ENCODE measurements at regions of chr3 and their contacts with region 1.

Region 1: GRCh38 chr3:44624749-44625480 is at the start of gene ZNF197:
- DNase-seq: peak; percentile 91
- ATAC-seq: peak; percentile 96
- H3K4me3 ChIP-seq: peak within 1 kb of the TSS; percentile 92
- H3K27ac ChIP-seq: peak within 1 kb of the TSS; percentile 25
- H3K4me1 ChIP-seq: peaks cover 13% of the 10 kb centered on the region
- H3K27me3 ChIP-seq: no peaks in the 10 kb centered on the region
- CTCF ChIP-seq: no peak
- total RNA-seq, gene ZNF197: 9.6 and 10.4 TPM in 2 replicates

Region 2: DNA sequence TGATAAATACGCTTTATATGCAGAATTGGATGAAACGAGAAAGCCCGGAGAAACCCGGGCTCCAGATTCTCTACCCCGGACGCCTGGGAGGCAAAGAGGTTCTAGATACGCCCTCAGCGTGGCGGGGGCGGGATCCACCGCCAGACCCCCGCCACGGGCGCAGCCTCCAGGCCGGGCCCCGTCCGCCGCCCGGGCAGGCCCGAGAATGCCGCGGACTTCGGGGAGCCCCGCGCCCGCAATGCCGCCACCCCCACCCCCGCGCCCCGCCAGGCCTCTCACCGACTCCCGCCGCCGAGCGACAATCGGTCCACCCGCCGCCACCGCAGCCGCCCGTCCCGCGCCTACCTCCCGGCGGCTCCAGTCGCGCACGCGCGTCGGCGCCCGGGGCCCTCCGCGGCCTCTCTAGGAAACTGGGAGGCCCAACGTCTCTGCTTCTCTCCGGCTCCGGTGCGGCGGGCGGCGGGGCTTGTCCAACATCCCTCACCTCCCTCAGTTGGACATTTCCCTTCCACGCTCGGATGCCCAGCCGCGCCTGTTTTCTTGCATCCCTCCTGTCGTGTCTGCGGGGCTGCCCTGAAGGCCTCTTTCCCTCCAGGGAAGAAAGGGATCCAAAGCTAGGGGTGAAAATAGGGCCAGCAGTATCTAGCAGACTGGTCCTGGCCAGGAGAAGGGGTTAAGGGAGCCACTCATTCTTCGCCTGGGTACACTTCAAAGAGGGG is 147.4 kb before region 1 on chr3 and contains the start of gene ZNF445:
- CTCF ChIA-PET with region 1: no interaction called
- POLR2A ChIA-PET with region 1: no interaction called
- intact Hi-C with region 1: loop called (anchors 2 kb)
- DNase-seq: peak; percentile 83
- ATAC-seq: peak; percentile 90
- H3K4me3 ChIP-seq: peak within 1 kb of the TSS; percentile 83
- H3K27ac ChIP-seq: no peak within 1 kb of the TSS
- H3K4me1 ChIP-seq: peaks cover 5% of the 10 kb centered on the region; the same call in 1 of the 2 replicates
- H3K27me3 ChIP-seq: no peaks in the 10 kb centered on the region
- CTCF ChIP-seq: no peak
- total RNA-seq, gene ZNF445: 7.7 and 8.2 TPM in 2 replicates

Region 3: DNA sequence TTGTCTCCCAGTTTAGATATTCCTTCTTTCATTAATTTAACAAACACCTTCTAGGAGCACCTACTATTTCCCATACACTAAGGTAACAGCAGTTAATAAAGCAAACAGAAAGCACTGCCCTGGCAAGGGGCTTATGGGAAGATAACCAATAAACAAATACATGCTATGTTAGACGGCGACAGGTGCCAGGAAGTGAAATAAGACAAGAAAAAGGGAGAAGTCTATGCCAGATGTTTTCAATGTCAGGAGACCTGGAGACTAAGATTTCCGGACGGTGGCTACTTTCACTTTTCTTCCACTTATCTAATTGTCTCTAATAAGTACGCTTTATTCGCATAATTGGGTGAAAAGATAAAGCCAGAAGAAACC is 114.9 kb before region 1 on chr3:
- CTCF ChIA-PET with region 1: interaction called, 4 read pairs
- POLR2A ChIA-PET with region 1: no interaction called
- intact Hi-C with region 1: loop called (anchors 1 kb)
- DNase-seq: peak; percentile 17
- ATAC-seq: peak; percentile 44
- H3K4me3 ChIP-seq: peak overlapping the region; percentile 81
- H3K27ac ChIP-seq: no peak overlapping the region
- H3K4me1 ChIP-seq: peaks cover 15% of the 10 kb centered on the region
- H3K27me3 ChIP-seq: no peaks in the 10 kb centered on the region
- CTCF ChIP-seq: no peak

Region 4: DNA sequence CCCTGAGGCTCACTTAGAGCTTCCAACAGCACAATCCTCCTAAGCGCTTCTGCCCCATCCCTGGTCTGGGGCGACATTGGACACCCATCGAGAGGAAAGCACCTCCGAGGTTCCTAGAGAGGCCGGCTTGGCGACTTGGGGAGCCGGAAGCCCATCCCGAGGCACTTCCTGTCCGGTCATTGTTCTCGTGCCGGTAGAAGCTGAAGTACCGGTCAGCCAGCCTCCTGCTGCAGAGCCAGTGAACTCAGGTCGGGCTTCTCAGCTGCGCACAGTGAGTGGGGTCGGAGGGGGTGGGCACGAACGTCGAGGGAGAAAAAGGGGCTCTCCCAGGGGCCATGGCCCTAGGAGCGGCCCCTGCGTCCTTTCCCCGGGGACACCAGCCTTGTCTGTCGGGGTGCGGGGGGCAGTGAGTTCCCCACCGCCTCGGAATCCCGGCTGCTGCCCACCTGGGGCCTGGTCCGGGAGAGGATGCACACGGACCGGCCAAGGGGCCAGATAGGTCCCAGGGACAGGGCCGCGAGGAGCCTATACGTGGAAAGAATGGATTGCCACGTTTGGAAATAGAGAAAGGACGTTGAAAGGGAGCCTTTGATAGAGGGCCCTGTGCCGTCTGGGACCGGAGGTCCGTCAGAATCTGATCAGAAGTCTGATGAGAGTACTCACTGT is 23.8 kb after region 1 on chr3 and contains the start of gene ZNF35:
- CTCF ChIA-PET with region 1: no interaction called
- POLR2A ChIA-PET with region 1: no interaction called
- intact Hi-C with region 1: loop called (anchors 1 kb)
- DNase-seq: peak; percentile 92
- ATAC-seq: peak; percentile 98
- H3K4me3 ChIP-seq: peak within 1 kb of the TSS; percentile 74
- H3K27ac ChIP-seq: no peak within 1 kb of the TSS
- H3K4me1 ChIP-seq: peaks cover 3% of the 10 kb centered on the region; the same call in 1 of the 2 replicates
- H3K27me3 ChIP-seq: no peaks in the 10 kb centered on the region
- CTCF ChIP-seq: no peak
- total RNA-seq, gene ZNF35: 12.0 and 12.4 TPM in 2 replicates

Region 5: DNA sequence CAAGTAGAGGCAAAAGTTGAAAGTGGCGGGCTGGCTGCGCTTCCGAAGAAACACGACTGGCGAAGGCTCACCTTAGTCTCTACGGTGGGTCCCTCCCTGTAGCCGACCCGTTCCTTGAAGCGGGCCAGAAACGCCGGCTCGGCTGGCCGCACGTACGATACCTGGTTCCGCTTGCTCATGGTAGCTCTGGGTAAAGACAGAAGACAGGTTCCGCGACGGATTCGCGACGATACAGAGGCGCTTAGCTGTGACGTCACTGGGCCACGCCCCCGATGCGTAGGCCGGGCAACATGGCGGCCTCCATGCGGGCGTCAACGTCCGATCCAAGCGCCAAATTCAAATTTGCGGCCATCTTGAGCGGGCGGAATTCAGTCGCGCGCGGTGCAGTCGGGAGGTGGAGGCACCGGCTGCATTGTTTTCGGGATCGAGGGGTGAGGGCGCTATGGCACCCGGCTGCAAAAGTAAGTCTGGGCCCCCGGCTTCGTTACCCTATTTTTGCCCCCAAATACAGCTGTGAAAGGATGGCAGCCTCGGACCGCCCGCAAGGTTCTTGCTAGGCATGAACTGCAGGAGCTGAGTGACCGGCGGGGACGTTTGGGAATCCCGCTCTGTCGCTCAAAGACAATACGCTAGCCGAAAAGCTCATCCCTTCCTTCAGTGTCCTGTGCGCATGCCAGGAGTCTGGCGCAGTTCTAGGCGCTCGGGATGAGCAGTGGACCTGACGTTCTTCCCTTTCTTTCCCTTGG is 136.7 kb after region 1 on chr3 and contains the starts of genes KIAA1143 and KIF15:
- CTCF ChIA-PET with region 1: no interaction called
- POLR2A ChIA-PET with region 1: no interaction called
- intact Hi-C with region 1: loop called (anchors 1 kb)
- DNase-seq: peak; percentile 98
- ATAC-seq: peak; percentile 90
- H3K4me3 ChIP-seq: peak within 1 kb of the TSS; percentile 76
- H3K27ac ChIP-seq: peak within 1 kb of the TSS; percentile 55
- H3K4me1 ChIP-seq: peaks cover 7% of the 10 kb centered on the region
- H3K27me3 ChIP-seq: no peaks in the 10 kb centered on the region
- CTCF ChIP-seq: peak; percentile 30; the same call in 1 of the 2 replicates
- total RNA-seq, gene KIAA1143: 16.5 and 20.4 TPM in 2 replicates
- total RNA-seq, gene KIF15: 19.1 and 31.8 TPM in 2 replicates